PC-9 (cell line): ENCODE measurements at regions of chr16 and their contacts with region 1.

Region 1: GRCh38 chr16:54286090-54286993 is at the start of gene IRX3:
- DNase-seq: peak; percentile 88 to 90
- H3K4me3 ChIP-seq: peak within 1 kb of the TSS; percentile 98
- H3K27ac ChIP-seq: peak within 1 kb of the TSS; percentile 86
- H3K4me1 ChIP-seq: peaks cover 6% of the 10 kb centered on the region
- H3K27me3 ChIP-seq: no peaks in the 10 kb centered on the region
- CTCF ChIP-seq: no peak
- total RNA-seq, gene IRX3: 13.1 and 16.0 TPM in 2 replicates

Region 2: GRCh38 chr16:54080524-54081008 is 205.8 kb before region 1 on chr16:
- CTCF ChIA-PET with region 1: no interaction called
- POLR2A ChIA-PET with region 1: no interaction called
- intact Hi-C with region 1: loop called (anchors 1 kb)
- DNase-seq: peak; percentile 50 to 99
- H3K4me3 ChIP-seq: peak overlapping the region; percentile 8; the same call in 1 of the 2 replicates
- H3K27ac ChIP-seq: peak overlapping the region; percentile 92
- H3K4me1 ChIP-seq: peaks cover 63% of the 10 kb centered on the region
- H3K27me3 ChIP-seq: no peaks in the 10 kb centered on the region
- CTCF ChIP-seq: no peak

Region 3: DNA sequence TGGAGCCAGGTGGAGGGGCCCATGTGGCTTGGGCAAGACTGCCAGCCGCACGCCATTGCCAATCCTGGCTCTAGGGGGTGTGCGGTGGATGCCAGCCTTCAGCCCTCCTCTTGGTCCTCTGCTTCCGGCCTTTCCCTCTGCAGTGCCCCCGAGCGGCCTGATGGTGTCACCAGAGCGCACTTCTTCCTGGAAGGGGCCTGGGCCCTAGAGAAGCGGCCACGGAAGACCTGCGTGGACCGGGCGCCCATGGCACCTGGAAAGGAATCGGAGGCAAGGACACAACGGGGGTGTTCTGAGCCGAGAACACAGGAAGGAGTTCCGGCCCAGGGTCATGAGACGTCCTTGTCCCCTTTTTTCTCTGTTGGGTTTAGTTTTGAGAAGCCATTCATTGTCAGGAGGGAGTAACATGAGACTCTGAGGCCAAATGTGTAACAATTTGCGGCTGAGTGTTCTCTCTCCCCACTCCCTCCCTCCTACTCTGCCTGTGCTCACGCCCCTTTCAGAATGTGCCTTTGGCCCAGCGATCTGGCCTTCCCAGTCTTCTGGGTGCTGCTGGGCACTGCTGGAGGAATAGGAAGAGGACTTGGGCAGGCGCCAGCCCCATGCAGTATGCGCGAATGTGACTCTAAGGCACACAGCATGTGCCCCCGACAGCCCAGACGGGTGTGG is 92.5 kb before region 1 on chr16:
- CTCF ChIA-PET with region 1: no interaction called
- POLR2A ChIA-PET with region 1: no interaction called
- intact Hi-C with region 1: loop called (anchors 2 kb)
- DNase-seq: peak; percentile 59 to 84
- H3K4me3 ChIP-seq: peak overlapping the region; percentile 52
- H3K27ac ChIP-seq: peak overlapping the region; percentile 17; the same call in 1 of the 2 replicates
- H3K4me1 ChIP-seq: no peaks in the 10 kb centered on the region; the same call in 1 of the 2 replicates
- H3K27me3 ChIP-seq: no peaks in the 10 kb centered on the region
- CTCF ChIP-seq: peak; percentile 90